ENCODE measurements at regions of chr9 and their contacts with region 1.

Region 1: DNA sequence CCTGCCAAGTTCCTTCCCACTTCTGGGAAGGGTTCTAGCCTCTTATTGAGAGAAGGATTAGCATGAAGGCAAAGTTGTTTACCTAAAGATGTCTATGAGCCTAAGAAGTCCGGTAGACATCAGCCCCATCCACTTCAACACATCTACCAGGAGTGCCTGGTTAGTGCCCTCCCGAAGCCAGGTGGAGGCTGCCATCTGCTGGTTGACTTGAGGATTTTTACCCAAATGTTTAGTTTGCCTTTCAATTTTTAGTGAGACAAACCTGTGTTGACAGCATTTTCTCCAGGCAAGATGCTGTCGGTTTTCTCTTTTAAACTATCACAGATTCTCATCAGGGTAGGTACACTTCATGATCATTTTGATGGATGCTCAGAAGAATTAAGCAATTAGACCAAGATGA is 83.6 kb upstream of the TNFSF8 start:
- DNase-seq: peak; percentile 87

Region 2: DNA sequence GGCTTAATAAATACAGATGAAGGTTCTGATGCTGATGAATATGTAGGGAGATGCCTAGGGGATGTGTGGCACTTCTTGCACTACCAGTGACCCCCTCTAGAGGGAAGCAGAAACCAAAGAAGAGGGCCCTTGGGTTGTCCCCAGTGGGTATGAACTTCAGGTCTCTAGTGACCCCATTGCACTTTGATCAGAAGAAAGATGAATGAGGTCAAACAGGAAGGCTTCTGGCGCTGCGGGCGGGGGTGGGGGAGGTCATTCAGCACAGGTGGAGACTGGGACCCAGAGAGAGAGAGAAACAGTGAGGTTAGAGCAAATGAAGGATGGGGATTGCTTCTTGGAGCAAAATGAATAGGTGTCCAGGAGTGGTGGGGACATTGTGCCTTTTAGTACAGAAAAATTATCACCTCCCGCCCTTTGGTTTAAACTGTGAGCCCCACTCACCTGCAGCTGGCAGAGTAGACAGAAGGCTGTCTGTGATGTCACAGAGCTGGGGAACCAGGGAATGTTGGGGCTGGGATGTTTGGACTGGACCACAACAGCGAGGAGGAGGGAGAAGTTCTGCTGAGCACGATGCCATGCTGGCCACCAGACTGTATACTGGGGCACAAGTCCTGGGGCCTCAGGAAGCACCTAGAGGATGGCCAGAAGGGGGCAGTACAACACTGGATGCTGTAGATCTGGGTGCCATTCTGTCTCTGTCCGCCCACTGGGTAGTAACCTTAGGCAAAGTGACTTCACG is 332.2 kb before region 1 on chr9 and contains the start of gene TEX48:
- intact Hi-C with region 1: loop called (anchors 1 to 10 kb)
- DNase-seq: peak; percentile 84
- total RNA-seq, gene TEX48: not detected

Region 3: DNA sequence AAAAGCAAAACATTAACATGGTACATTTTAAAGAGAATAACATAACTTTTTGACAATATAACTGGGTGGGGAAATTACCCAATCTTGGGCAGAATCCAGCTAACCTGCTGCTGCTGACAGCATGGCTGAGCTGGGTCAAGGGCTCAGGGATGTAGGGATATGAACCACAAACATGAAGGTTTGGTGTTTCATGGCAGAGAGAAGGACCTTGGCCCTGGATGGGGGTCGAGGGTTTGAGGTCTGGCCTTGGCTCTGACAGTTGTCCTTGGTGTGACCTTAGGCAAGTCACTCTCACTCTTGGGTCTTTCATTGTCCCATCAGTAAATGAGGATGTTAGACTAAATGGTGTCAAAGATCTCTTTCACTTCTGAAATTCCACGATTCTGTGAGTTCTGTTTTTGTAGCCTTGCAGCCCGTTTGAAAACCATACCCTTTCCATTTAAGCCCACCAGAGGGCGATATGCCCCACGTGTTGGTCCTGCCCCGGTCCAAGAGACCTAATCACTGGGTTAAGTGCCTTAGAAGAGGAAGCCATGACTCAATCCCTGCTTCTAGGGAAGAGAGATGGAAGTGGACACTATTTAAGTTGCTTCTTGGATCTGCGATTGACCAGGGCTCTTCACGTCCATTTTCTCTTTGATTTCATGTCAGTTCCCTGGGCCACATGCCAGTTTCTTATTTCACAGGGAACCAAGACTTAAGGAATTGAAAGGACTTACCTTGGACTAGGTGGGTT is 275.2 kb before region 1 on chr9:
- intact Hi-C with region 1: loop called (anchors 5 to 10 kb)
- DNase-seq: no peak

Region 4: GRCh38 chr9:114745108-114745848 is 268.7 kb before region 1 on chr9:
- intact Hi-C with region 1: loop called in 1 of 2 experiments (anchors 10 kb)
- DNase-seq: no peak

Region 5: GRCh38 chr9:115524453-115525059 is 510.6 kb after region 1 on chr9:
- intact Hi-C with region 1: no loop called
- DNase-seq: no peak

Measured in posterior vena cava (tissue), 2 donors.